HEK293 (cell line): ENCODE measurements at regions of chr6 and their contacts with region 1.

Region 1: GRCh38 chr6:31702819-31703522 is at the start of gene ABHD16A:
- H3K4me3 ChIP-seq: peak within 1 kb of the TSS; percentile 63
- H3K27ac ChIP-seq: peak within 1 kb of the TSS; percentile 62
- H3K4me1 ChIP-seq: no peaks in the 10 kb centered on the region
- CTCF ChIP-seq: 0 out of 2 replicates have a peak, but pooled peaks have one; percentile 9

Region 2: DNA sequence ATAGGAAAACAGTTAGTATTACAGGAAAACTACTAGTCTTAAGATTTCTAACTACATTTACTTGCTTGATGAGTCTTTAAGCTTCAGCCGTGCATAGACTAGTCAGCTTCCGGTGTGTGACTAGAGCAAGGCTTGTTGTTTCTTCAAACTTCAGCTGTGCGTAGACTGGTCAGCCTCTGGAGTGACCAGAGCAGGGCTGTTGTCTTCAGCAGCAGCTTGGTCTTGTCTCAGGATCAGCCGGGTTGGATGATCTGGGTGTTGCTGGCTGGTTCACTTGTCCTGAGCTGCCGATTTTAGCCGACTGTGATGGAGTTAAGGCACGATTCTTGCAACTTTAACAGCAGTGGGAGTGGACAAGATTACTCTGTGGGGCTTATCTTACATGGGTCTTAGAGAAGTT is 475.8 kb before region 1 on chr6:
- CTCF ChIA-PET with region 1: no interaction called
- POLR2A ChIA-PET with region 1: no interaction called
- H3K4me3 ChIP-seq: no peak overlapping the region
- H3K27ac ChIP-seq: no peak overlapping the region
- H3K4me1 ChIP-seq: no peaks in the 10 kb centered on the region
- CTCF ChIP-seq: no peak

Region 3: DNA sequence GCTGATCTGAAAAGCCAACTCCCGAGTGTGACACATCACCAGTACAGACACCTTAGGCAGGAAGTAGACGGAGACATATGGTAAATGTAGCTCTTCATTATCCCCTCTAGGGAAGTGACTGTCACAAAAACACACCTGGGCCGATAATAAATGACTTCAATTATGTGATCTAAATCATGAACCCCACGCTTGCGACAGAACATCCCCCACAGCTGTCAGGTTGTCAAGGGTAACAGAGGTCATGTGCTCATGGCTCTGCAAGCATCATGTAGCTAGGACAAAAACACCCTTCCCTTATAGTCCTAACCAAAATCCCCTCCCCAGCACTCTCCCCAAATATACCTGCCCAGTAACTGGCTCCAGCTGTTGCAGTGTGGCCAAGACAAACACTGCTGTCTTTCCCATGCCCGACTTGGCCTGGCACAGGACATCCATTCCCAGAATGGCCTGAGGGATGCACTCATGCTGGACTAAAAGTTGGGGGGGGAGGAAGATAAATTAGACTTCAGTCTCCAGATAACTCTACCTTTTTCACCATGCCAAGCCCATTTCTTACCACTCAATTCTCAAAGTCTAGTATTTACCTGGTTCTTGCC is 164.1 kb before region 1 on chr6:
- CTCF ChIA-PET with region 1: no interaction called
- POLR2A ChIA-PET with region 1: no interaction called
- H3K4me3 ChIP-seq: peak overlapping the region; percentile 64
- H3K27ac ChIP-seq: 0 out of 2 replicates have a peak overlapping the region, but pooled peaks have one; percentile 100
- H3K4me1 ChIP-seq: peaks cover 14% of the 10 kb centered on the region
- CTCF ChIP-seq: no peak

Region 4: DNA sequence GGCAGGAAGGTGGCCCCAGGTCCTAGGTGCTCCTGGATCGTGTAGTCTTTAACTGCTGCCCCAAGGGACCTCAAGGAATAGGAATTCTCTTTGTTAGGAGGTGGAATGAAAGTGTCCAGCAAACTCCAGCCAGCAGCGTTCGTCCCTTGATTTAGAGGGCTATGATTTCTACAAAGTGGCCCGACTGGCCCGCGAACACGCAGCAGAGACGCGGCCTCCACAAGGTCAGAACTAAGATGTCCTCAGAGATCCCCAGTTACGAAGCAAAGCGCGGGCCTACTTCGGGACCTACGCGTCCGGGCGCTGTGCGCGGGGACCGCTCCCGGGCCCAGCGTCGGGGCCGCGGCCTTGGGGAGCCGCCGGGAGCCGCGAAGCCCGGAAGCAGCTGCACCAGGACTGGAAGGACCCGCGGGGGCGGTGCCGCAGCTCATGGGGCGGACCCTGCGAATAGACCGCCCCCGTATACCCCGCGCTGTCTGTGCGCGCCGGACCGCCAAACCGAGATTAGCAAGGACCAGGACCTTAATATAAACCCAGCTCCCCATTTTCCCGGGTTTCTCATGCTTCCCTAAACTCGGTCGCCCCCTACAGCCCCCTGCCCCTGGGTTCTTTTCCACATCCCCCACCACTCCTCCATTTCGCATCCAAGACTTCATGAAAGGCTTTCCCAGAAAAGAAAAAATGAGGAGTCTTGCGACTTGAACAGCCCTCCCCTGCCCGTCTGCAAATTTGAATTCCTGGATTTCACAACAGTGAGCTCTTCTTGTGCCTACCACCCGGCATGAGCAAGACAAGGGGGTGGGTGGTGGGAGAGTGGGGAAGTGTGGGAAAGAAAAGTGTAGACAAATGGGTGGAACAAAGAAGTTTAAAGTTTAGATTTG is 42.4 kb before region 1 on chr6 and contains the start of gene C6orf47:
- CTCF ChIA-PET with region 1: no interaction called
- POLR2A ChIA-PET with region 1: interaction called, 13 read pairs
- H3K4me3 ChIP-seq: peak within 1 kb of the TSS; percentile 67
- H3K27ac ChIP-seq: peak within 1 kb of the TSS; percentile 73
- H3K4me1 ChIP-seq: peaks cover 6% of the 10 kb centered on the region; the same call in 1 of the 2 replicates
- CTCF ChIP-seq: no peak

Region 5: DNA sequence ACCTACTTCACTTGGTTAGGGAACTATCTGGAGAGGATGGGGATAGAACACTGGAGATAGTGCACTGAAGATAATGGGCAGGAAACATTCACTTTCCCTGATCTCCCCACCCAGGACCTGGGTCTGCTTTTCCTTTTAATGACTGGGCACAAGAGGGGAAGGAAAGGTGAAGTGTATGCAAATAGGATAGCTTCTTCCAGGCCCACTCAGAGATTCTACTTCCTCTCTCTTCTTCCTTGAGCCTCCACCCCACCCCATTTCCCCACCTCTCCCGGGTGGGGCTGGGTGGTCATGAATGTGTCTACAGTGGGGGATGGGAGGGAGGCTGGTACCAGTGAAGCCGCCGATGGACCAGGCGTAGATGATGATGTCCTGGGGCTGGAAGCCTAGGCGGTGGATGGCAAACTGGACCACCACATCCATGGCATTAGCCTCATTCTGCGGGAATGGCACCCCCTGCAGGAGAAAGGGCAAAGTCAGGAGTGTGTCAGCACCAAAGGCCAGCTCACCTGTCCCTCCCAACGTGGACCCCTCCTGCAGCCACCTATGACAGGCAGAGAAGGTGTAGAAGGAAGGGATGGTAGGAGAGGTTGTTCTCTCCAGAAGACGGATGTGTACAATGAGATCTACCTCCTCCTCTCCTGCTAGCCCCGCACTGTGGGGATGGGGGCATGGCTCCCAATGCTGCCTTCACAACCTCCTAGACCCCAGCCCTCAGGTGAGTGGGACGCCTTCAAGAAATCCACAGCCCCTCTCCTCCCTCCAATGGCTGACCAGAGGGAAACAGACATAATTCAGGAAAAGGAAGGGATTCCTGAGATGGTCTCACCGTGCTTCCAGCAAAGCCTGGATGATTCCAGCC is 13.5 kb before region 1 on chr6:
- CTCF ChIA-PET with region 1: interaction called, 6 read pairs
- POLR2A ChIA-PET with region 1: interaction called, 30 read pairs
- H3K4me3 ChIP-seq: no peak overlapping the region
- H3K27ac ChIP-seq: no peak overlapping the region
- H3K4me1 ChIP-seq: no peaks in the 10 kb centered on the region
- CTCF ChIP-seq: no peak; the same call in 1 of the 2 replicates

Region 6: DNA sequence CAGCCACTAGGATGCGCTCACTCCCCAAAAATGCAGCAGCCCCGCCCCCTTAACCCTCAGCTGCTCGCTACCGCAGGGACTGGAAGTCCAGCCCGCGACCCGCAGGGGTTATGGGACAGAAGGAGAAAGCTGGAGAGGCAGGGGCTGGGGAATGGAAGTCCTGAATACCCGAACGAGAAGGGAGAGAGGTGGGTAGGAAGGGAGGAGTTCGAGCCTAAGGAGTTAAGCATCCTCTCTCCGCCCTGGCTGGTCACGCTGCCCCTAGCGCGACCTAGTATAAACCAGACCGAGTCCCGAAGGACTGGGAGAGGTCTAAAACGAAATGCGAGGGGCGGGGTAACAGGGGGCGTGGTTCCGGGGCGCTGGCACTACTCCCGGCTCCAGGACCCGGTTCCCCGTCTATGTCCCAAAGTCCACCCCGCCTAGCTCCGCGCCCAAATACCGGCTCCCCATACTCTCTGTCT is 26.6 kb after region 1 on chr6:
- CTCF ChIA-PET with region 1: interaction called, 7 read pairs
- POLR2A ChIA-PET with region 1: interaction called, 16 read pairs
- H3K4me3 ChIP-seq: peak overlapping the region; percentile 74
- H3K27ac ChIP-seq: peak overlapping the region; percentile 67; the same call in 1 of the 2 replicates
- H3K4me1 ChIP-seq: peaks cover 3% of the 10 kb centered on the region
- CTCF ChIP-seq: peak; percentile 94

Region 7: DNA sequence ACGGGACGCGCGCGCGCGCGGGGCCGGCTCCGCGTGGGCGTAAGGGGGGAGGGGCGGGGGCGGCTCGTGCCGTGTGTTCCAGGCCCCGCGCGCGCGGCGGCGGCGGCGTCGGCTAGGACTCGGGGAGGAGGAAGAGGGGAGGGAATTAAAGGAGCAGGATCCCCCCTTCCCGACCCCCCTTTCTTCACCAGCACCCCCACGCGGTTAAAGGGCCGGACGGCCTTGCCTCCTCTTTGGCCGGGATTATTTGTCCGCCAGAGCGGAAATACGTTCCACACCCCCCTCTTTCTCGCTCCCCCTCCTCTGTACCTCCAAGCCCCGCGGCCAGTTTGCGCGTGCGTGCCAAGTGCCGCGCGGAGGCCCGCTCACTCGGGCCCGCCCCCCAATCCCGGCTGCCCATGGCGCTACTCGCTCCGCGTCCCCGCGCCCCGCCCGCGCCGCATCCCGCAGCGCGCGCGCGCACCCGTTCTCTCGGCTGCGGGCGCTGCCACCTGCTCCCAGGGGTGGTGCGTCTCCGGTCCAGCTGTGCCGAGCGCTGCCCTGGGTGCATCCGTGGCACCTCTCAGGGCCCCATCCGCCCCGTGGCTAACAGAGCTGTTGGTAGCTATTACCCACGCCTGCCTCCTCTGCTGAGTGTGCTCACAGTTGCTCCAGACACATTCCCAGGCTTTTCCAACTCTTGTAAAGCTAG is 199.1 kb after region 1 on chr6 and contains the start of gene ZBTB12:
- CTCF ChIA-PET with region 1: no interaction called
- POLR2A ChIA-PET with region 1: interaction called, 11 read pairs
- H3K4me3 ChIP-seq: peak within 1 kb of the TSS; percentile 62
- H3K27ac ChIP-seq: peak within 1 kb of the TSS; percentile 9
- H3K4me1 ChIP-seq: peaks cover 9% of the 10 kb centered on the region
- CTCF ChIP-seq: peak; percentile 57; the same call in 1 of the 2 replicates

Region 8: DNA sequence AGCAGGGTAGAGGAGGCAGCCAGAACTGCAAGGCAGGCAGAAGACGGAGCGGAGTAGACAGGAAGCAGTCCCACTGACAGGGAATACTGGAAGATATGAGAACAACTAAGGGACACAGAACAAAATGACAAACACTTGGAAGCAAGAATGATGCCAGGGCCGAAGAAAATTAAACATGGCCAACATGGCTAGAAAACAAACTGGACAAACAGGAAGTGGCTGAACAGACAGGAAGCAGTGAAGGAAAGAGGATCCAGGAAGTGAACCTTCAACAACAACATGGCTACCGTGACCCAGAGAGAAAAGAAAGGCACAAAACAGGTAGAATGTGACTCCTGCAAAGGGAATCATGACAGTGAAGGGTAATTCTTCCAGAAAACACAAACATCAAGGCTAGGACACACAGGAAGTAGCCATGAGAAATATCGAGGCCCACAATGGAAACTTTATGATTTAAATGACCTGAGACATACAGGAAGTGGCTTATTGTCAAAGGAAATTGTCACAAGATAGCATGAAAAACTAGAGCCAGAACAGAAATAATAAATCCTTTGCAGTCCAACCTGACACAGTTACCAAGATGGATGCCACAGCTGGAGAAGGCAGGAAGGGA is 1480.2 kb after region 1 on chr6:
- CTCF ChIA-PET with region 1: no interaction called
- POLR2A ChIA-PET with region 1: no interaction called
- H3K4me3 ChIP-seq: no peak overlapping the region
- H3K27ac ChIP-seq: no peak overlapping the region
- H3K4me1 ChIP-seq: no peaks in the 10 kb centered on the region
- CTCF ChIP-seq: no peak